Activated T-helper 1 cell treated with anti-CD3 and anti-CD28 coated beads, Interleukin-12 subunit alpha, Interleukin-12 subunit beta, Interleukin-2, Interleukin-4 antibody, amounts not matched to agents 30 ng/mL and 10 ng/mL and 1 ng/mL, durations not matched to agents 14 hours and 24 hours and 36 hours (primary cell): ENCODE measurements at regions of chr21 and their contacts with region 1.

Region 1: GRCh38 chr21:34630536-34631143 is 15.7 kb upstream of the RCAN1 start:
- DNase-seq: no peak
- H3K4me3 Mint-ChIP-seq: no peak overlapping the region
- H3K27ac Mint-ChIP-seq: no peak overlapping the region
- H3K4me1 Mint-ChIP-seq: no peaks in the 10 kb centered on the region
- H3K27me3 Mint-ChIP-seq: peaks cover 8% of the 10 kb centered on the region

Region 2: DNA sequence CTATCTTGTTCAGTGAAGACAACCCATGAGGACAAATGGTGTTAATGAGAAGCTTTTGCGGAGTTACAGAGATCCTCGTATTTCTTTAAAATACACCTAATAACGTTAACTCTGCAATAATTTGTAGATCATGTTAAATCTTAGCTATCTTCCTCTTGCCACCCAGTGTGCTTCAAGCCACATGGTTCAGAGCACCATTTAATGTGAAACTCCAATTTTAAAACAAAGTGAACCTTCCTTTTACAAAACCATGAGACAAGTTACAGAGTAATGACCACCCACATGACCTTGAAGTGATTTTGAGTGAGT is 268.6 kb before region 1 on chr21:
- intact Hi-C with region 1: loop called (anchors 1 kb)
- DNase-seq: no peak
- H3K4me3 Mint-ChIP-seq: no peak overlapping the region
- H3K27ac Mint-ChIP-seq: no peak overlapping the region
- H3K4me1 Mint-ChIP-seq: peaks cover 10% of the 10 kb centered on the region
- H3K27me3 Mint-ChIP-seq: peaks cover 41% of the 10 kb centered on the region

Region 3: DNA sequence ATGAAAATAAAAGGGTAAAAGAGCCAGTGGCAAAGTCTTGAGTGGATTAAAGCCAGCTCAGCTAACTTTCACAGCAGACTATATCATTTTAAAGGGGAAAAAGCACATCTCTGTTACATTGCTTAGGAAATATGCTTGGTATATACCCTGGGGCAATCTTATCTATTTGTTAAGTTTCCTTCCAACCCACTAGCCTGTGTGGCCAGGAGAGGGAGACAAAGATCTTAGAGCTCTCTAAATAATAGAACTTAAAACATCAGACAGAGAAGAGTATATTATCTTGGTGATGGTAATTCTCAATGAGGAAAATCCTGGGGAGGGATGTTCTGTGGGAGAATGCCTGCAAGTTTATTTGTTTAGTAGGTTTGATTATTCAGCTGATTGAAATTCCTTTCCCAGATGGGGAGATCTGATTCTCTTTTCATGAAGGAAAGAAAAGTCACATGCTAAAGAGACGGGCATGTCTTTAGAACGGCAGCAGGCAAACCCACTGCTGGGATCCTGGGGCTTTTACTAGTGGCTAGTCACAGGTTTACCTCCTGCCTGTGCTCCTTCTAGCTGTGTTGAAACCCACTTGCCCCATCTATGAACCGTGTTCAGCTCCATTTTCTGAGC is 263.2 kb before region 1 on chr21:
- intact Hi-C with region 1: loop called (anchors 1 kb)
- DNase-seq: peak; percentile 9
- H3K4me3 Mint-ChIP-seq: no peak overlapping the region
- H3K27ac Mint-ChIP-seq: no peak overlapping the region
- H3K4me1 Mint-ChIP-seq: no peaks in the 10 kb centered on the region
- H3K27me3 Mint-ChIP-seq: peaks cover 18% of the 10 kb centered on the region

Region 4: GRCh38 chr21:34510148-34511142 is 120.2 kb before region 1 on chr21:
- intact Hi-C with region 1: loop called (anchors 1 kb)
- DNase-seq: no peak
- H3K4me3 Mint-ChIP-seq: no peak overlapping the region
- H3K27ac Mint-ChIP-seq: no peak overlapping the region
- H3K4me1 Mint-ChIP-seq: no peaks in the 10 kb centered on the region
- H3K27me3 Mint-ChIP-seq: peaks cover 2% of the 10 kb centered on the region

Region 5: GRCh38 chr21:34669149-34669879 is 38.7 kb after region 1 on chr21:
- intact Hi-C with region 1: no loop called
- DNase-seq: no peak
- H3K4me3 Mint-ChIP-seq: no peak overlapping the region
- H3K27ac Mint-ChIP-seq: no peak overlapping the region
- H3K4me1 Mint-ChIP-seq: peaks cover 6% of the 10 kb centered on the region
- H3K27me3 Mint-ChIP-seq: peaks cover 72% of the 10 kb centered on the region

Region 6: GRCh38 chr21:34707876-34708325 is 77.3 kb after region 1 on chr21:
- intact Hi-C with region 1: no loop called
- DNase-seq: peak; percentile 28
- H3K4me3 Mint-ChIP-seq: peak overlapping the region; percentile 48
- H3K27ac Mint-ChIP-seq: no peak overlapping the region
- H3K4me1 Mint-ChIP-seq: peaks cover 24% of the 10 kb centered on the region
- H3K27me3 Mint-ChIP-seq: peaks cover 16% of the 10 kb centered on the region

Region 7: GRCh38 chr21:35475768-35476167 is 845.1 kb after region 1 on chr21:
- intact Hi-C with region 1: no loop called
- DNase-seq: no peak
- H3K4me3 Mint-ChIP-seq: peak overlapping the region; percentile 15
- H3K27ac Mint-ChIP-seq: peak overlapping the region; percentile 49
- H3K4me1 Mint-ChIP-seq: peaks cover 53% of the 10 kb centered on the region
- H3K27me3 Mint-ChIP-seq: peaks cover 2% of the 10 kb centered on the region